GM12878 (cell line): ENCODE measurements at regions of chr10 and their contacts with region 1.

Region 1: DNA sequence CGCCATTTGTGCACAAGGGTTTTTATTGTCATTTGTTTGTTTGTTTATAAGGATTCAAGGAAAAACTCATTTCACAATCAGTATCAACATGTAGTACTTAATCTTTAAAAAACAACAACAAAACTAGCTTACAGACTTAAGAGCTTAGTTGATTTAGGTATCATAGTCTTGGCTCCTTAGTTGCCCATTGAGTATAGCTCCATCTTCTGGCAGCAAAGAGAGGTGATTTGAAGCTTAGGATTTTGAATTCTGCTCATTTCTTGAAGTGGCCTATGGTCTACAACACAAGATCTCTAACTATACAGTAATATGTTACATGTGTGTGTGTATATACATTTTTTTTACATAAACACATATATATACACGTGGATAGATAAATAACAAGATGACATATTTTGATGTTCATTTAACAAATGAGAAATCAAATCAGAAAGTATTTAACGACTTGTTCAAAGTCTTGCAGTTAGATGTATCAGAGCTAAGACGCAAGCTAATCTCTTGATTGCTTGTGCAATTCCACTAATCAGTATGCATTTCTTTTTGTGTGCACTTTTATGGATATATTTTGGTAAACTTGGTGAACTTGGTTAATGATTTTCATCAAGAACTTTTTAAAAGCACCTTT is 307.3 kb downstream of the CAMK1D start:
- DNase-seq: no peak
- ATAC-seq: peak; percentile 89
- H3K4me3 ChIP-seq: no peak overlapping the region
- H3K27ac ChIP-seq: no peak overlapping the region
- H3K4me1 ChIP-seq: peaks cover 5% of the 10 kb centered on the region
- H3K27me3 ChIP-seq: no peaks in the 10 kb centered on the region
- CTCF ChIP-seq: peak; percentile 65 to 76 (median 66)
- EP300 ChIP-seq: no peak
- POLR2A ChIP-seq: no peak
- RAD21 ChIP-seq: peak; percentile 85

Region 2: DNA sequence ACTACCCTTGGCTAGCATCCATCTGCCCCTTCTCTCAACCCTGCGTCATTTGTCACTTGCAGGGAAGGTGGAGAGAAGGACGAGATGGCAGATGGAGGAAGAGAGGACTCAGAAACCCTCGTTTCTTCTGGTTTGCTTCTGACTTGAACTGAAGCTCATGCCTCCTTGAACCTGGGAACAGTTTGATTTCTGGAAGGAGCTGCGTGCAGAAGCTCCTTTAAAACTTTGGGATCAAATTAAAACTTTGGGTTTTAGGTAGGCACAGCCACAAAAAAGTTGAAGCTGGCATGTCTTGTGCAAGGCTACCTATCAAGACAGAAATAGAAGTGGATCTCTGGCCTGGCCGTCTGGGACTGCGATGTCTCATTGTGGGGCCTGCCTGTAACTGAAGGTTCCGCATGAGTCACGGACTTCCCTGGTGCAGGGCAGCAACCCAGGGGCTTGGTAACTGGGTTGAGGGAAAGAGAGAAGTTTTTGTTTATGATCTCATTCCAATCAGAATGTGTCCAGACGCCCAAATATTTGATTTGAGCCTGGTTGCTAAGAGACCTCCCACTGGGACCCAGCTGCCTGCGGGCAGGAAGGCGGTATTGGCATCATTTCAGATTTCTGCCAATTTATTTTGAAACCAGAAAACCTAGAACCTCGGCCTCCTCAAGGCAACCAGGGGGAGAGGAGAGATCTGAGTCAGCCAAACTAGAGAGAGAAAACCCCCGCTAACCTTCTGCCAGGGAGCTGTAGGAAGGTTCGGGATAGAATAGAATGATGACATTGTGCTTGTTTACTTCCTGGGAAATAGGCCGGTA is 323.0 kb before region 1 on chr10:
- CTCF ChIA-PET with region 1: interaction called, 11 read pairs
- POLR2A ChIA-PET with region 1: no interaction called
- RAD21 ChIA-PET with region 1: interaction called, 5 read pairs
- SMC1A ChIA-PET with region 1: interaction called, 5 read pairs
- in situ Hi-C with region 1: no loop called
- intact Hi-C with region 1: no loop called
- DNase-seq: no peak
- ATAC-seq: peak; percentile 94
- H3K4me3 ChIP-seq: peak overlapping the region; percentile 34; the same call in 1 of the 2 replicates
- H3K27ac ChIP-seq: peak overlapping the region; percentile 27
- H3K4me1 ChIP-seq: peaks cover 22% of the 10 kb centered on the region
- H3K27me3 ChIP-seq: no peaks in the 10 kb centered on the region
- CTCF ChIP-seq: no peak
- EP300 ChIP-seq: peak; percentile 27 to 52; a peak in 2 of 4 replicates
- POLR2A ChIP-seq: no peak
- RAD21 ChIP-seq: no peak

Region 3: GRCh38 chr10:12463459-12463838 is 193.2 kb before region 1 on chr10:
- CTCF ChIA-PET with region 1: interaction called, 7 read pairs
- POLR2A ChIA-PET with region 1: no interaction called
- RAD21 ChIA-PET with region 1: interaction called, 10 read pairs
- SMC1A ChIA-PET with region 1: interaction called, 3 read pairs
- in situ Hi-C with region 1: no loop called
- intact Hi-C with region 1: no loop called
- DNase-seq: no peak
- ATAC-seq: peak; percentile 72
- H3K4me3 ChIP-seq: no peak overlapping the region
- H3K27ac ChIP-seq: peak overlapping the region; percentile 15; the same call in 1 of the 2 replicates
- H3K4me1 ChIP-seq: peaks cover 30% of the 10 kb centered on the region
- H3K27me3 ChIP-seq: no peaks in the 10 kb centered on the region
- CTCF ChIP-seq: no peak
- EP300 ChIP-seq: no peak
- POLR2A ChIP-seq: no peak
- RAD21 ChIP-seq: no peak

Region 4: DNA sequence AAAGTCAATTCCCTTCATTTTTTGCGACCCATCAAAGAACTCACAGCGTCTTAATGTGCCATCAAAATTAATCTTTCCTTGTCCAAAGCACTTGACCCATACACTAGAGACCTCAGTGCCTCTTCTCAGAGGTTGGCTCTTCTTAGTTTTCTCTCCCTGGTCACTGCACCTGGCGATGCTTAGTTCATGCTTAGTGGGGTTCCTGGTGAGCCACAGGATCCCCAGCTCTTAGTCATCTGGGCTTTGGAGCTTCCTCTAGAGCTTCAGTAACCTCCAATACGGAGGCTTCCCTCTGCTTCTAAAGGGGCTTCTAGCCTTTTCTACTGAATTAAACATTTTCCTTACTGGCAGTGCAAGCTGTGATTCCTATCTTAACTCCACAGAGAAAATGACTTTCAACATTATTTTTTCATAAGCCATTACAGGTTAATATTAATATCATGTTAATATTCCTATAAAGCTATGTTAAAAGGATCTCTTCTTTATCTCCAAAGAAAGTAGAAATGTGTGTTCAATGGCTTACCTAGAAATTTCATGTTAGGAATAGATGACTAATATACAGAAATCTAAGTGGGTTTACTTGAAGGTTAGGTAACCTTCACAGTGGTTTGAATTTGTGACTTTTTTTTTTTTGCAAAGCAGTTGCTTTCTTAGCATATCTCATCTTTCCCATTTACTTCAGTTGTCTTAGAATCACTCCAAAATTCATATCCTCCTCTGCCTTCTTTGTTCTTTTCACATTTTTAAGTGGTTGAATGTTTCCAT is 12.1 kb before region 1 on chr10:
- CTCF ChIA-PET with region 1: interaction called, 30 read pairs
- POLR2A ChIA-PET with region 1: no interaction called
- RAD21 ChIA-PET with region 1: interaction called, 16 read pairs
- SMC1A ChIA-PET with region 1: interaction called, 21 read pairs
- in situ Hi-C with region 1: no loop called
- intact Hi-C with region 1: no loop called
- DNase-seq: no peak
- ATAC-seq: peak; percentile 61
- H3K4me3 ChIP-seq: no peak overlapping the region
- H3K27ac ChIP-seq: no peak overlapping the region
- H3K4me1 ChIP-seq: no peaks in the 10 kb centered on the region
- H3K27me3 ChIP-seq: no peaks in the 10 kb centered on the region
- CTCF ChIP-seq: no peak
- EP300 ChIP-seq: no peak
- POLR2A ChIP-seq: no peak
- RAD21 ChIP-seq: no peak